Heart right ventricle (tissue), 16 donors: ENCODE measurements at regions of chr4 and their contacts with region 1.

Region 1: GRCh38 chr4:89307446-89308160 is at the start of gene GPRIN3:
- DNase-seq: peak; percentile 62 to 73
- ATAC-seq: peak; percentile 59 to 87 (median 75)
- H3K4me3 ChIP-seq: peak within 1 kb of the TSS; percentile 34 to 87 (median 77)
- H3K27ac ChIP-seq: peak within 1 kb of the TSS; percentile 25 to 93 (median 79)
- H3K4me1 ChIP-seq: peaks cover 0 to 46% (median 12%) of the 10 kb centered on the region in 9 donors
- H3K27me3 ChIP-seq: peaks cover 0 to 7% (median 0%) of the 10 kb centered on the region in 7 donors
- CTCF ChIP-seq: no peak
- total RNA-seq, gene GPRIN3: 4.3 to 12.2 (median 9.8) TPM

Region 2: DNA sequence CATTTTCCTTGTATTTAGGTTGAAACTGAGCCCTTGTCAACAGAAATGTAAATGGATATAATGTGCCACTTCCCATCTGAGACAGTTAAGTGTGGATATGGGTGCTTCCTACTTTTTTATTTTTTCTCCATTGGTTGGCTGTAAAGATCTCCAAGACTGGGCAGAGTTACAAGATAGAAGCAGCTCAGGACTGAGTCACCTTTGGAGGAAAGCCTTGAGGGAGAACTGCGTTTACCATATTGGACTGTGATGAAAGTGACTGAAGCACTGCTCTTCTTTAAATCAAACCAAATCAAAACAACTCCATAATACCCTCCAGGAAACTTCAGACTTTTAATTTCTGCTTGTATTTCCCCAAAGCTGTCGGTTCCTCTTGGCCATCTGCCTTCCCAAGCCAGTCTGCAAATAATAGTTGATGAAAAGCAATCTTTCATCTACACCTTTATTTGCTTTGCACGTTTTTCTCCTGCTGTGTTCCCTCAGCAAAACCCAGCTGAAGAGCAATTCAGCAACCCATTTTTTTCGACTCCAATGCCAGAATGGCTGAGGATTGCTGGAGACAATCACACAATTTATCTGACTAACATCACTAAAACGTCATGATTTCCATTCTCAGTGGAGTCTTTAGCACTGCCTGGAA is 94.4 kb before region 1 on chr4:
- intact Hi-C with region 1: no loop called
- DNase-seq: no peak
- ATAC-seq: no peak
- H3K4me3 ChIP-seq: no peak overlapping the region
- H3K27ac ChIP-seq: no peak overlapping the region
- H3K4me1 ChIP-seq: no peaks in the 10 kb centered on the region
- H3K27me3 ChIP-seq: peaks cover 0 to 6% (median 0%) of the 10 kb centered on the region in 7 donors
- CTCF ChIP-seq: no peak

Region 3: DNA sequence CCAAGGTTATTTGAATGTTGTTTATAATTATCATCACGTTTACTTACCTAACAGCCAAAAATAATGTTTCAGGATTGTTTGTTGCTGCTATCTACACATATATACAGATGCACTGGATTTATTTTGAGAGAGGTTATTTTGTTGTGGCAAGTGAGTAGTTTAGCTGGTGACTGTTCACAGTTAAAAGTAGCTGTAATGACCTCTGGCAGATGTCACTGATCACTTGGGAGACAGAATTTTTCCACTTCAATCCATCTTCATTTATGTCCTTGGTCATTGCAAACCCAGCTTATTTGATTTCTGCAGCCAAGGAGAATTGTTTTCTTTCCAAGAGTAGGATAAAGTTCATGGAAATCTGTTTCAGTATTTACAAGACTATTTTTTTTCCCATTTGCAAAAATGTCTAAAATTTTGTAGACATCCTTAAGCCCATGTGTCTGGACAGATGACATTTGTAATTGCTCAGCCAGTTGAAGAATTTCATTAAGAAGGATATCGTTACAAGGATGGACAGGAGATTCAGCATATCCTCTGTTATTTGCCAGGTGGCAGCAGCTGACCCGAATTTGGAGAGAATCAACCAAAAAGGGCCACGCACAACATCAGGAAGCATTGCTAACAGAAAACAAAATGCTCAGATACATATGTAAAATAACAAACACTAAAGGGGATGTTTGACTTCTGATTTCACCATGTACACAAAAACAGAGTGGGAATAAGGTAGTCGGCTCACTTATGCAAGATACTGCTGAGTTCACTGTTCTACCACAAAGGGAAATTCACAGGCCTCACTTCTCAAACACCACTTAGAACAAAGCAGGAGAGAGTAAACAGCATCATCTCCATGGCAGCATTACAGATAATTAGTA is 64.5 kb before region 1 on chr4:
- intact Hi-C with region 1: loop called in 2 of 10 experiments (anchors 5 to 10 kb)
- DNase-seq: no peak
- ATAC-seq: peak in 6 of 8 donors; percentile 34 to 78 (median 68)
- H3K4me3 ChIP-seq: no peak overlapping the region
- H3K27ac ChIP-seq: peak overlapping the region in 4 of 10 donors; percentile 13 to 54 (median 32)
- H3K4me1 ChIP-seq: peaks cover 0 to 37% (median 20%) of the 10 kb centered on the region in 9 donors
- H3K27me3 ChIP-seq: no peaks in the 10 kb centered on the region
- CTCF ChIP-seq: peak in 3 of 9 donors; percentile 19 to 38 (median 25)

Region 4: DNA sequence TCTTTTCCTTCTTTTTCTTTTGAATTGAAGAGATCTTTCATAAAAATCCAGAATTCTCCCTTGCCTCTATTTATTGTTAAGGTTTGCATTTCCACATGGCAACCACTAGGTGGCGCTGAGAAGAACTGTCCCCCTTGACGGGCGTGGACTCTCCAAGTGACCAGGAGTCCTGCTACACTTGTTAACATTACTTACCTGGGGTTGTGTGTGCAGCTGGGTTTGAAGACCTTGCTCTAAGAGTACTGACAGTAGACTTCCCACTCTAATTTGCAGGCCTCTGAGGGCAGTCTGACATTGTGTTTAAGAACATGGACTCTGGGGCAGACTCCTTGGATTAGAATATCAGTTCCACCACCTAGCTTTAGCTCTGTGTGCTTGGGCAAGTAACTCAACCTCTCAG is 52.8 kb before region 1 on chr4:
- intact Hi-C with region 1: loop called in 2 of 10 experiments (anchors 5 kb)
- DNase-seq: no peak
- ATAC-seq: peak in 4 of 8 donors; percentile 39 to 43 (median 41)
- H3K4me3 ChIP-seq: no peak overlapping the region
- H3K27ac ChIP-seq: peak overlapping the region in 1 of 10 donors; percentile 13
- H3K4me1 ChIP-seq: peaks cover 2 to 54% (median 25%) of the 10 kb centered on the region in 9 donors
- H3K27me3 ChIP-seq: no peaks in the 10 kb centered on the region
- CTCF ChIP-seq: peak; percentile 10 to 78 (median 66)

Region 5: GRCh38 chr4:89275587-89275986 is 32.0 kb before region 1 on chr4:
- intact Hi-C with region 1: no loop called
- DNase-seq: no peak
- ATAC-seq: no peak
- H3K4me3 ChIP-seq: no peak overlapping the region
- H3K27ac ChIP-seq: no peak overlapping the region
- H3K4me1 ChIP-seq: peaks cover 0 to 13% (median 0%) of the 10 kb centered on the region in 9 donors
- H3K27me3 ChIP-seq: no peaks in the 10 kb centered on the region
- CTCF ChIP-seq: no peak

Region 6: GRCh38 chr4:89410687-89411086 is 103.1 kb after region 1 on chr4:
- intact Hi-C with region 1: loop called in 3 of 10 experiments (anchors 5 to 10 kb)
- DNase-seq: no peak
- ATAC-seq: peak in 1 of 8 donors; percentile 42
- H3K4me3 ChIP-seq: no peak overlapping the region
- H3K27ac ChIP-seq: peak overlapping the region in 3 of 10 donors; percentile 14 to 46 (median 42)
- H3K4me1 ChIP-seq: peaks cover 0 to 34% (median 14%) of the 10 kb centered on the region in 9 donors
- H3K27me3 ChIP-seq: no peaks in the 10 kb centered on the region
- CTCF ChIP-seq: no peak

Region 7: GRCh38 chr4:89773805-89774204 is 466.2 kb after region 1 on chr4:
- intact Hi-C with region 1: no loop called
- DNase-seq: no peak
- ATAC-seq: no peak
- H3K4me3 ChIP-seq: no peak overlapping the region
- H3K27ac ChIP-seq: no peak overlapping the region
- H3K4me1 ChIP-seq: no peaks in the 10 kb centered on the region
- H3K27me3 ChIP-seq: no peaks in the 10 kb centered on the region
- CTCF ChIP-seq: no peak